ENCODE measurements at regions of chr4 and their contacts with region 1.

Region 1: DNA sequence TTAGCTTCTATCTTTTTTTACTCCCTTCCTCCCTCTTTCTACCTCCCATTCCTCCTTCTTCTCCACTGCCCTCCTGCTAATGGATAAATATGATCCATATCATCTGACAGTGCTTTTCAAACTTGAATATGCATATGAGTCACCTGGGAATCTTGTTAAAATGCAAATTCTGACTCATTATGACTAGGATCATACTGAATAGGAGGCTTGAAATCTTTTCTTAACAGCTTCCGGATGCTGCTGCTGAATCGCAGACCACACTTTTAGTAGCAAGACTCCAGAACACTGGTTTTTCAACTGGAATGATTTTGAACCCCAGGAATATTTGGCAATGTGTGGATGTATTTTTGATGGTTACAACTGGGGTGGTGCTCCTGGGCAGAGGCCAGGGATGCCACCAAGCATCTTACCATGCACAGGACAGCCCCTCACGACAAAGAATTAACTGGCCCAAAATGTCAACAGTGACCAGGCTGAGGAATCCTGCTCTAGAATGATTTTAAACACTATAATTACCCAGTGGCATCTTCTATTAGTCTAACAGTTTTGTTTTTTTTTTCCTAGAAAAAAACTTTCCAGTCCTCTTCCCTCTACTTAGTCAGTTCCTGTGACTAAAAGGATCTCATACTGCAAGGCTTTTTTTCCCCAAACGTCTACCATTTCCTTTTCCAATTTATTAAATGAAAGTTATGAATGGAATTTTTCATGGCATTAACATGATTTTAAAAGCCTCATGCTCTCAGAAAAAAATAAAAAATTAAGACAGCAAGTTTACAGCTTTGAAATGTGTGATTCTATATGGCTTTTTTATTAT is 10.6 kb upstream of the PYURF start:
- DNase-seq: no peak
- ATAC-seq: no peak
- H3K4me3 ChIP-seq: no peak overlapping the region
- H3K27ac ChIP-seq: no peak overlapping the region
- H3K4me1 ChIP-seq: no peaks in the 10 kb centered on the region
- H3K27me3 ChIP-seq: no peaks in the 10 kb centered on the region

Region 2: DNA sequence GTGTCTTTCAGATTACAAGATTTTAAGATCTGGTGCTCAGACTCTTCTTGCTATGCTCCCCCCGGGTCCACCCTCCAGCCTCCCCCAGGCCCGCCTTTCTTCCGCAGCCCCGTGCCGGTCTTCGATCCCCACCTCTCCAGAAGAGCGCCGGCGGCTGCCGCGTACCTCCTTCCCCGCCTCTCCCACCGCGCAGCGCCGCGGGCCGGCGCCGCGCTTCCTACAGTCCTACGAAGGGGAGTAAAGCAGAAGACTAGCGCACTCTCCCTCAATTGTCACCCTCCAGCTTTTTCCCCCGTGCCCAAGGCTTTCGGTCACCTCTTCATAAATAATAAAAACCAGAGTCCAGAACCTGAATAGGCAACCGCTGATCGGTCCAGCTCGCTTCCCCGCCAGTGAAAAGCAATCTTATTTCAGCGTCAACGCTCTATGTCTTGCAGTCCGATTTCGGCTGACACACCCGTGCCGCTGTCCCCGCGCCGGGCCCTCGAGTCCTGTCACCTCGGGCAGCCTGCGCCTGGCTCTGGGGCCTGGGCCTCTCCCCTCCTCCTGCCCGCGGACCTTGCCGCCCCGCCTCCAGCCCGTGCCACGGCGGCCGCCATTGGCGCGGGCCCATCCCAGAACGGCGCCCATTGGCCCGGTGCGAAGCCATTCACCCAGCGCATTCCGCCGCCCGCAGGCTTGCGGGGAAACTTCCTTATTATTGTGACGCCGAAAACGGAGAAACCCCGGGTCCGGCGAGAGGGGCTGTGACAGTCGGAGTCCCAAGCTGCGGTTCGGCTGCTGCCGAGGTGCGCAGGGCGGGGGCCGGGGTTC is 57.8 kb after region 1 on chr4 and contains the start of gene HERC3:
- intact Hi-C with region 1: loop called in 1 of 4 experiments (anchors 10 kb)
- DNase-seq: peak; percentile 91 to 98 (median 97)
- ATAC-seq: peak; percentile 99
- H3K4me3 ChIP-seq: peak within 1 kb of the TSS; percentile 76
- H3K27ac ChIP-seq: peak within 1 kb of the TSS; percentile 76
- H3K4me1 ChIP-seq: no peaks in the 10 kb centered on the region
- H3K27me3 ChIP-seq: no peaks in the 10 kb centered on the region
- total RNA-seq, gene HERC3: 42.4 to 60.6 (median 50.9) TPM

Region 3: GRCh38 chr4:88659055-88659889 is 125.1 kb after region 1 on chr4:
- intact Hi-C with region 1: loop called (anchors 2 to 10 kb)
- DNase-seq: peak in 2 of 3 donors; percentile 37 to 63
- ATAC-seq: peak; percentile 95 to 97
- H3K4me3 ChIP-seq: no peak overlapping the region
- H3K27ac ChIP-seq: no peak overlapping the region
- H3K4me1 ChIP-seq: peaks cover 3% of the 10 kb centered on the region
- H3K27me3 ChIP-seq: no peaks in the 10 kb centered on the region

Region 4: GRCh38 chr4:88964450-88964849 is 430.3 kb after region 1 on chr4:
- intact Hi-C with region 1: no loop called
- DNase-seq: no peak
- ATAC-seq: no peak
- H3K4me3 ChIP-seq: no peak overlapping the region
- H3K27ac ChIP-seq: no peak overlapping the region
- H3K4me1 ChIP-seq: no peaks in the 10 kb centered on the region
- H3K27me3 ChIP-seq: no peaks in the 10 kb centered on the region

Region 5: GRCh38 chr4:89024051-89024675 is 490.0 kb after region 1 on chr4:
- intact Hi-C with region 1: loop called in 1 of 4 experiments (anchors 10 kb)
- DNase-seq: peak in 1 of 3 donors; percentile 15
- ATAC-seq: peak; percentile 95 to 96
- H3K4me3 ChIP-seq: no peak overlapping the region
- H3K27ac ChIP-seq: no peak overlapping the region
- H3K4me1 ChIP-seq: peaks cover 3% of the 10 kb centered on the region
- H3K27me3 ChIP-seq: no peaks in the 10 kb centered on the region